OCI-LY7 (cell line): ENCODE measurements at regions of chr2 and their contacts with region 1.

Region 1: GRCh38 chr2:55043841-55044240 is 6.4 kb downstream of the RTN4 start:
- DNase-seq: no peak
- H3K4me3 ChIP-seq: no peak overlapping the region
- H3K27ac ChIP-seq: no peak overlapping the region
- H3K4me1 ChIP-seq: peaks cover 18% of the 10 kb centered on the region
- CTCF ChIP-seq: no peak

Region 2: DNA sequence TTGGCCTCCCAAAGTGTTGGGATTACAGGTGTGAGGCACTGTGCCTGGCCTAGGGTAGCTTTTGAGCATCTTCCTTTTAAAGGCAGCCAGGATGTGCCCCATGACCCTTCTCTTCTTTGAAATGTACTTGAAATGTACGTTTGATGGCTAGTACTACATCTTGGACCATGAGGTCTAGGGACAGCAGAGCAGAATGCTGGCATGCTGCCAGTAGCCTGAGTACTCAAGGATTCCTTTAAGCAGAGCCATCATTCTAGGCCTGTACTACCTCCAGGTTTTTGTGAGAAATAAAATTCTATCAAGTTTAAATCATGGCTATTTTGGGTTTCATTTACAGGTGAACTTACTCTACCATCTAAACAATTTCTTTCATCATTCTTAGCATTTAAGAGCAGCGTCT is 323.3 kb before region 1 on chr2:
- CTCF ChIA-PET with region 1: no interaction called
- POLR2A ChIA-PET with region 1: no interaction called
- intact Hi-C with region 1: no loop called
- DNase-seq: no peak
- H3K4me3 ChIP-seq: no peak overlapping the region
- H3K27ac ChIP-seq: no peak overlapping the region
- H3K4me1 ChIP-seq: peaks cover 25% of the 10 kb centered on the region
- CTCF ChIP-seq: no peak

Region 3: GRCh38 chr2:55026202-55026601 is 17.6 kb before region 1 on chr2:
- CTCF ChIA-PET with region 1: interaction called, 3 read pairs
- POLR2A ChIA-PET with region 1: interaction called, 38 read pairs
- intact Hi-C with region 1: loop called (anchors 1 kb)
- DNase-seq: peak; percentile 48
- H3K4me3 ChIP-seq: peak overlapping the region; percentile 54
- H3K27ac ChIP-seq: peak overlapping the region; percentile 76
- H3K4me1 ChIP-seq: peaks cover 48% of the 10 kb centered on the region
- CTCF ChIP-seq: no peak